CD8-positive, alpha-beta T cell (primary cell): ENCODE measurements at regions of chr17 and their contacts with region 1.

Region 1: DNA sequence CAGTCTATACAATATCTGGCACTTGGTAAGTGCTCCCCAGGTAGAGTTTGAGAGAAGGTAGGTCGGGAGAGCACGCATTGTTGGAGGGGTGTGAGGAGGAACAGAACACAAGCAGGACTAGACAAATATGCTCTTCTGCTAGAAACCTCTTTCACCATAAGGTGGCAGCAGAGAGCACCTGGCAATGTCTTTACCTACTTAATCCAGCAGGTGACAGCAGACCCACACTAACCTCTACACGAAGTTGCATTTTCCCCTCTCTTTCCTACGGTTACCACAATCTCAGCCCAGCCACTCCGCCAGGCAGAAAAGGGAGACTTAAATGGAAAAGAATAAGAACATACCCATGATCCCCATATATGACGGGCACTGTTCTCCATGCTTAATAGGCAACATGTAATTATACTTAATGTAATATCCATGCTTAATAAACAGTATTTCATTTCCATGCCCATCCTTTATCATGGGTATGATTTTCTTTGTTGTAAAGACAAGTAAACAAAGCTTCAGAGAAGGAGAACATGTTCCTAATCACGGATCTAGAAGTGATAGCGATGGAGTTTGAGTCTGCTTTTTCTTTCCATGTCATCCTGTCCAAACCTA is 55.1 kb upstream of the CCL2 start:
- DNase-seq: peak; percentile 47 to 82 (median 65)
- ATAC-seq: peak; percentile 92
- H3K4me3 ChIP-seq: no peak overlapping the region
- H3K4me3 Mint-ChIP-seq: no peak overlapping the region
- H3K27ac ChIP-seq: no peak overlapping the region
- H3K27ac Mint-ChIP-seq: no peak overlapping the region
- H3K4me1 ChIP-seq: no peaks in the 10 kb centered on the region
- H3K4me1 Mint-ChIP-seq: peaks cover 4% of the 10 kb centered on the region
- H3K27me3 ChIP-seq: peaks cover 0 to 2% of the 10 kb centered on the region in 2 experiments
- H3K27me3 Mint-ChIP-seq: peaks cover 25% of the 10 kb centered on the region
- CTCF ChIP-seq: peak; percentile 100

Region 2: DNA sequence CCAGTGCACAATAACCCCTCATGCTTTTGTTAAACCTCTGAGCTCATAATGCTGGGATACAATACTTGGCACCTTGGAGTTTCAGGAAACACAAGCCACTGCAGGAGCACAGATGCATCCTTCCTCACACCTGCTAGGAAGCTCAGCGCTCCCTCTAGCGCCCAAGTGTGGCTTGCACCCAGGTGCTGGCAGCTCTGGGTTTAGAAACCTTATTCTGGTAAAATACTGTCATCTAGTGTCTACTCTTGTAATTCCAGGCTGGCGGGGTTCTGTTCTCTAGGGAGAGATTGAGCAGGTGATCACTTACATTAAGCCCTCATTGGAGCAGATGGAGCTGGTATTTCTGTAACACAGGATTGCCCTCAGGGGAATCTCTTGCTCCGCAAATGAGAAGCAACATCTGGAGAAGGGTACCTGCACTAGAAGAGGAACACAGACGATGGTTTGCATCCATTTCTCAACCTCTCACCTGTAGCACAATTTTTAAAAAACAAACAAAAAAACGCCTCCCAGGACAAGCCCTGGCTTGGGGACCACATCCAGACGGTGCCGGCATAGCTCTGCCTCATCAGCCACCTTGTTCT is 161.5 kb after region 1 on chr17:
- CTCF ChIA-PET with region 1: interaction called, 77 read pairs
- POLR2A ChIA-PET with region 1: interaction called, 5 read pairs
- intact Hi-C with region 1: loop called in 1 of 2 experiments (anchors 1 kb)
- DNase-seq: peak; percentile 28 to 72 (median 54)
- ATAC-seq: peak; percentile 42
- H3K4me3 ChIP-seq: no peak overlapping the region
- H3K4me3 Mint-ChIP-seq: no peak overlapping the region
- H3K27ac ChIP-seq: no peak overlapping the region
- H3K27ac Mint-ChIP-seq: no peak overlapping the region
- H3K4me1 ChIP-seq: no peaks in the 10 kb centered on the region
- H3K4me1 Mint-ChIP-seq: peaks cover 18% of the 10 kb centered on the region
- H3K27me3 ChIP-seq: no peaks in the 10 kb centered on the region
- H3K27me3 Mint-ChIP-seq: peaks cover 11% of the 10 kb centered on the region
- CTCF ChIP-seq: peak; percentile 65